Activated CD8-positive, alpha-beta memory T cell treated with anti-CD3 and anti-CD28 coated beads, Interleukin-2, amount 10 ng/mL, durations not matched to agents 7 days and 5 days (primary cell): ENCODE measurements at regions of chr19 and their contacts with region 1.

Region 1: DNA sequence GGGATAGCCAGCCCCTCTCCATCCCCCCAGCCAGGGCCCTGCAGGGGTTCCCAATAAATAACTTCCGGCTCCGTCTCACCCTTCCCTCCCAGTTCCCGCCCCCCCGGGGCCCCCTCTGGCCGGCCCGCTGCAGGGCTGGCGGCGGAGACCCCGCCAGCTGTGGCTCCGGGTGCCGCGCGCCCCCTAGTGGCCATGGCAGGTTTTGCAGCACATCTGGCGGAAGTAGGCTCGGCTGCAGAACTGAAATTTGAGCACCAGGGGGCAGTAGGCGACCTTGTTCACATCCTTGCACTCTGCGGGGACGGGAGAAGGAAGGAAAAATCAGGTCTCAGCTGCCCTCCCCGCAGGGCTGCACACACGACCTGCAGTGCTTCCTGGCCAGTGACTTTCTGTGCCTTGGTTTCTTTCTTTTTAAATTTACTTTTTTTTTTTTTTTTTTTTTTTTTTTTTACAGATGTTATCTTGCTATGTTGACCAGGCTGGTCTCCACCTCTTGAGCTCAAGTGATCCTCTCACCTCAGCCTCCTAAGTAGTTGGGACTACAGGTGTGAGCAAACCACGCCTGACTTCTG is 3.6 kb upstream of the MYO1F start:
- DNase-seq: peak; percentile 90
- ATAC-seq: peak; percentile 44
- H3K4me3 Mint-ChIP-seq: no peak overlapping the region
- H3K27ac Mint-ChIP-seq: no peak overlapping the region
- H3K4me1 Mint-ChIP-seq: peaks cover 28% of the 10 kb centered on the region
- H3K27me3 Mint-ChIP-seq: peaks cover 7% of the 10 kb centered on the region

Region 2: DNA sequence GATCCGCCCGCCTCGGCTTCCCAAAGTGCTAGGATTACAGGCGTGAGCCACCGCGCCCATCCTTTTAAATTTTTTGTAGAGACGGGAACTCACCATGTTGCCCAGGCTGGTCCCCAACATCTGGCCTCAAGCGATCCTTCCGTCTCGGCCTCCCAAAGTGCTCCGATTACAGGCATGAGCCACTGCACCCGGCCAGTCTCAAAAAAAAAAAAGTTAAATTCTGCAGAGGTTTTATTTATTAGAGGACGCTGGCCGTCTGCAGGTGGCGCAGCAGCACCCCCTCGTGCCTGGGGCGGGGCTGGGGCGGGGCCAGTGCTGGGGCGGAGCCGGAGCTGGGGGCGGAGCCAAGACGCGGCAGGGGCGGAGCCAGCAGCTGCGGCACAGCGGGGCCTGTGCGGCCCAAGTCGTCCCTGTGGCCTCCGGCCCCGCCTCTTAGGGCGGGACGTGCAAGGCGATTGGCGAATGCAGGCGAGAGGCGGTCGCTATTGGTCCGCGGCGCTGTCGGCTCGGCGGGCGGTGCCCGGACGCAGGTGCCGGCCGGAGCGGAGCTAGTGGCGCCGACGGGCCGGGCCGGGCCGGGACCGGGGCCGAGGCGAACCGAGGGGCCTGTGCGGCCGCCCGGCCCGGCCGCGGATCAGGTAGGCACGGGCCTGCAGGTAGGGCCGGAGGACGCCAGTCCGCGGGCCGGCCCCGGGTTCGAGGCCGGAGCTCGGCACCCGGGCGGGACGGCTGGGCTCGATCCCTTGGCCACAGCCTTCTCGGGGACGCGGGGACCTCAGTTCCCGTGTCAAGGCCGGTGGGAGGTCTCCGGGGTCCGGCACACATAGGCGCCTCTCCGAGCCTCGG is 167.8 kb before region 1 on chr19 and contains the start of gene MARCHF2:
- CTCF ChIA-PET with region 1: interaction called, 27 read pairs
- DNase-seq: peak; percentile 97
- ATAC-seq: peak; percentile 100
- H3K4me3 Mint-ChIP-seq: peak within 1 kb of the TSS; percentile 54
- H3K27ac Mint-ChIP-seq: peak within 1 kb of the TSS; percentile 61
- H3K4me1 Mint-ChIP-seq: peaks cover 8% of the 10 kb centered on the region
- H3K27me3 Mint-ChIP-seq: no peaks in the 10 kb centered on the region
- total RNA-seq, gene MARCHF2: 16.5 to 20.9 TPM

Region 3: DNA sequence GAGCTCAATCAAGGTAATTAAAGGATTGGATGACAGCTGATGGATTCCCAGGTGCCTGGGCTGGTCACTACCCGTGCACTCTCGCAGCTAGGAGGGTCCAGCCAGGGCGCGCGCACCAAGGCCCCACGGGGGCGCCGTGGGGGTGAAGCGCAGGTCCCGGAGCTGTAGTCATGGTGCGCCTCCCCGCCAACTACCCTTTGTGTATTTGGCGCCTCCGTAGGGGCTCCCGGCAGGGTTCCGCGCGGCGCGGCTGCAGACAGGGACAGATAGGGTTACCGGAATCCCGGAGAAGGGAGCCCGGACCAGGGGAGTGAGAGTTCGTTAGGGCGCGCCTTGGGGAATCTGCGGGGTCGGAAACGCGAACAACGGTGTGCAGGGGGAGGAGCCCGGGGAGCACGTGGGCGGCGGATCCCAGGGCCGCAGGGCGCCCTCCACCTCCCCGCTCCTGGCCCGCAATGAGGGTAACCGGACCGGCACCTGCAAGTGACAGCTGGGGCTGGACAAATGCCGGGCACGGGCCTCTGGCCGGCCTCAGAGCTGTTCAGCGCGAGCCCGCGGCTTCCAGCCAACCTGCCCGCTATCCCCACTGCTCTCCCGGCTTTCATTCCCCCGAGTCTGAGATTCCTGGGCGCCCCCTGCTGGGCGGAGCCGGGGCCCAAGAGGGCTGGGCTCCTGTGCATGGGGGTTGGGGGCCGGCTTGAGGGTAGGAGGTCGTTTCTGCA is 75.0 kb before region 1 on chr19:
- CTCF ChIA-PET with region 1: interaction called, 15 read pairs
- DNase-seq: peak; percentile 71
- ATAC-seq: peak; percentile 83
- H3K4me3 Mint-ChIP-seq: peak overlapping the region; percentile 82
- H3K27ac Mint-ChIP-seq: peak overlapping the region; percentile 78
- H3K4me1 Mint-ChIP-seq: peaks cover 15% of the 10 kb centered on the region
- H3K27me3 Mint-ChIP-seq: no peaks in the 10 kb centered on the region

Region 4: GRCh38 chr19:8544168-8544567 is 36.6 kb before region 1 on chr19:
- CTCF ChIA-PET with region 1: interaction called, 25 read pairs
- DNase-seq: no peak
- ATAC-seq: no peak
- H3K4me3 Mint-ChIP-seq: no peak overlapping the region
- H3K27ac Mint-ChIP-seq: no peak overlapping the region
- H3K4me1 Mint-ChIP-seq: no peaks in the 10 kb centered on the region
- H3K27me3 Mint-ChIP-seq: no peaks in the 10 kb centered on the region

Region 5: DNA sequence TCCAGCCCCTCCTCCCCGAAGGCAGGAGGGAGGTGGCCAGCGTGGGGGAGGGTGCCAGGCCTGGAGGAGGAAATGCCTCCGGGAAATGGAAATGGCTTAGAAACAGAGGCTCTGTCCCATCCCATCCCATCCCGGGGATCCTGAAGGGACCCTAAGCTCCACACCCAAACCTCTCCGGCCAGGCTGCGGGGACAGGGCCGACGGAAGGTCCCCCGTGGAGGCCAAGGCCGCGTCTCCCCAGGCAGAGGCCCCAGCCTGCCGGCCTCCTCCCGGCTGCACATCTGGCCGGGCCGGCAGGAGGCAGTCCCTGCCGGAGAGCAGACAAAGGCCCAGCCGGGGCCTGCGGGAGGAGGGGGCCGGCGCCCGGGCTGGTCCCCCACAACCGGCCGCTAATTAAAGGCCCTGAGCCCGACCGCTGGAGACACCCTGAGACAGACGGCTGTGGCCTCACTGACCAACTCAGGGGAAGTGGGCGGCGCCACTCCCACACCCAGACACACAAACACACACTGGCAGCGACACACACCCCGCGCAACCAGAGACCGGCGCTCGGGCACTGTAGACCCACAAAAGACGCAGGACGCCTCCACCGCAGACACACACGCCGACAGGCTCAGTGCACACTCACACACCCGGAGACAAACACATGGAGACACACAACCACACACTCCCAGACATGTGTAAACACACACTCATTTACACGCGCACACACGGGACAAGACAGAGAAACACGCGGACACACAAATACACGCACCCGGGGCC is 28.7 kb after region 1 on chr19:
- CTCF ChIA-PET with region 1: interaction called, 13 read pairs
- DNase-seq: no peak
- ATAC-seq: peak; percentile 28
- H3K4me3 Mint-ChIP-seq: peak overlapping the region; percentile 64
- H3K27ac Mint-ChIP-seq: peak overlapping the region; percentile 10
- H3K4me1 Mint-ChIP-seq: peaks cover 12% of the 10 kb centered on the region
- H3K27me3 Mint-ChIP-seq: peaks cover 8% of the 10 kb centered on the region

Region 6: DNA sequence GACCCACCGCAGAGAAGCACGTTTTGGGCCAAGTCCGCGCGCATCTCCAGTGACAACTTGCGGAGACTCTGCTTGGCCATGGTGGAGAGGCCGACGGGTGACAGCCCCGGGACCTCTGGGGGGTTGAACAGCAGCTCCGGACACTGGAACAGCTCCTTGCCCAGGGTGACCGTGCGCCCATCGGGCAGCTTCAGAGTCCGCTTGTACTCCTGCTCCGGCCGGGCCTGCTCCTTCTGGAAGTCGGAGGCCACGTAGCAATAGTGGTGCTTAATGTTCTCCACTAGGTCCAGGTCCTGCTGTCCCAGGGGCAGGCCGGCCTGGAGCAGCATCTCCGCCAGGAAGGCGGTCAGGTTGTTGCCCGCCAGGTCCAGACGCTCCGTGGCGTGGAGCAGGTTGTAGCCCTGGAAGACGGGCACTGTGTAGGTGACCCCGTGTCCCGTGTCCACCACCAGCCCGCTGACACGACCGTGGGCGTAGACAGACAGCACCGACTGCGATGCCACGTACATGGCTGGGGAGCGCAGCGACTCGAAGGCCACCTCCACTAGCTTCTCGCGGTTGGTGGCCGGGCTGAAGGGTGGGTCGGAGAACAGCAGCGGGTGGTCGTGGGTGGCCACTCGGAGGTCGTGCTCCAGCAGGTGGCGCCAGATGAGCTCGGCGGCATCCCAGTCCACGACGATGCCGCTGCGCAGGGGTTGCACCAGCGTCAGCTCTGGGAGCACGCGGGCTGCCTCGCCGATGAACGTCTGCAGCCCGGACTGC is 117.1 kb after region 1 on chr19:
- CTCF ChIA-PET with region 1: interaction called, 25 read pairs
- DNase-seq: no peak
- ATAC-seq: no peak
- H3K4me3 Mint-ChIP-seq: no peak overlapping the region
- H3K27ac Mint-ChIP-seq: no peak overlapping the region
- H3K4me1 Mint-ChIP-seq: peaks cover 35% of the 10 kb centered on the region
- H3K27me3 Mint-ChIP-seq: peaks cover 19% of the 10 kb centered on the region